Activated CD4-positive, alpha-beta T cell treated with anti-CD3 and anti-CD28 coated beads for 36 hours (primary cell): ENCODE measurements at regions of chr5 and their contacts with region 1.

Region 1: DNA sequence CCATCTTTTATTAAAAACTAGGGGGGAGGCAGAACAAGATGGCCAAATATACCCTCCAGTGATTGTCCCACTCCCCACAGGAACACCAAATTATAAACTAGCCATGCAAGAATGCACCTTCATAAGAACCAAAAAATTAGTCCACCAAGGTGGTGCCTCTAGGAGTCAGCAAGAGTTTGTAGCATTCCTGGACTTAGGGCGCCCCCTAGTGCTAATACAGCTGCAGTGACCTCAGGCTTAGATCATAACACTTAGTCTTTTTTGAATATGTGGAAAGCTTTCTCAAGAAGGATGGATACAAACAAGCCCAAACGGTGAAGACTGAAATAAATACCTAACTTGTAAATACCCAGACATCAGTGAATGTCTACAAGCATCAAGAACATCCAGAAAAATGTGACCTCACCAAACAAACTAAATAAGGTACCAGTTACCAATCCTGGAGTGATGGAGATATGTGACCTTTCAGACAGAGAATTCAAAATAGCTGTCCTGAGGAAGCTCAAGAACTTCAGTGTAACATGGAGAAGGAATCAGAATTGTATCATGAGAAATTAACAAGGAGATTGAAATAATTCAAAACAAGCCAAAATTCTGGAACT is 19.3 kb downstream of the PPIP5K2 start:
- DNase-seq: peak; percentile 88
- ATAC-seq: peak; percentile 95
- H3K4me3 Mint-ChIP-seq: no peak overlapping the region
- H3K27ac Mint-ChIP-seq: no peak overlapping the region
- H3K4me1 Mint-ChIP-seq: peaks cover 8% of the 10 kb centered on the region
- H3K27me3 Mint-ChIP-seq: no peaks in the 10 kb centered on the region

Region 2: DNA sequence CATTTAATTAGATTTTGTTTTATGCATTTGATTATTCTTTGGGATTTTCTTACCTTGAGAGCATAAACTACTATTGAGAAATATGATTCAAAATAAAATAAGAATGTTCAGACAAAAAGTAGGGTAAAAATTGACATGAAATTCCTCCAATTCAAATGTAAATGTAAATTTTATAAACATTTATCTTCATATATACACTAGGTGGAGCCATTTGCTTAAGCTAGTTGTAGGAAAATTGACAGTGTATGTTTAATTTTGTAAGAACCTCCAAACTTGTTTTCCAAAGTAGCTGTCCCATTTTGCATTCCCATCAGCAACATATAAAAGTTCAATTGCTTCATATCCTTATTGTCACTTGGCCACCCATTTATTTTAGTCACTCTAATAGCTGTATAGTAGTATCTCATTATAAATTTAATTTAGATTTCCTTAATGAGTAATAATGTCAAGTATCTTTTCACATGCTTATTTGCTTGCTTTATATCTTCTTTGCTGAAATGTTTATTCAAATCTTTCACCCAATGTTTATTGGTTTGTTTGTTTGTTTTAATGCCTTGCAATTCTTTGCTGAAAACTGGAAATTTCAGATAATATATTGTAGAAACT is 602.9 kb before region 1 on chr5:
- CTCF ChIA-PET with region 1: interaction called, 4 read pairs
- POLR2A ChIA-PET with region 1: no interaction called
- intact Hi-C with region 1: loop called (anchors 1 to 2 kb)
- DNase-seq: no peak
- ATAC-seq: no peak
- H3K4me3 Mint-ChIP-seq: no peak overlapping the region
- H3K27ac Mint-ChIP-seq: no peak overlapping the region
- H3K4me1 Mint-ChIP-seq: no peaks in the 10 kb centered on the region
- H3K27me3 Mint-ChIP-seq: peaks cover 4% of the 10 kb centered on the region

Region 3: GRCh38 chr5:102583276-102584124 is 555.9 kb before region 1 on chr5:
- CTCF ChIA-PET with region 1: interaction called, 6 read pairs
- POLR2A ChIA-PET with region 1: no interaction called
- intact Hi-C with region 1: loop called (anchors 1 kb)
- DNase-seq: no peak
- ATAC-seq: no peak
- H3K4me3 Mint-ChIP-seq: no peak overlapping the region
- H3K27ac Mint-ChIP-seq: no peak overlapping the region
- H3K4me1 Mint-ChIP-seq: no peaks in the 10 kb centered on the region
- H3K27me3 Mint-ChIP-seq: peaks cover 2% of the 10 kb centered on the region

Region 4: DNA sequence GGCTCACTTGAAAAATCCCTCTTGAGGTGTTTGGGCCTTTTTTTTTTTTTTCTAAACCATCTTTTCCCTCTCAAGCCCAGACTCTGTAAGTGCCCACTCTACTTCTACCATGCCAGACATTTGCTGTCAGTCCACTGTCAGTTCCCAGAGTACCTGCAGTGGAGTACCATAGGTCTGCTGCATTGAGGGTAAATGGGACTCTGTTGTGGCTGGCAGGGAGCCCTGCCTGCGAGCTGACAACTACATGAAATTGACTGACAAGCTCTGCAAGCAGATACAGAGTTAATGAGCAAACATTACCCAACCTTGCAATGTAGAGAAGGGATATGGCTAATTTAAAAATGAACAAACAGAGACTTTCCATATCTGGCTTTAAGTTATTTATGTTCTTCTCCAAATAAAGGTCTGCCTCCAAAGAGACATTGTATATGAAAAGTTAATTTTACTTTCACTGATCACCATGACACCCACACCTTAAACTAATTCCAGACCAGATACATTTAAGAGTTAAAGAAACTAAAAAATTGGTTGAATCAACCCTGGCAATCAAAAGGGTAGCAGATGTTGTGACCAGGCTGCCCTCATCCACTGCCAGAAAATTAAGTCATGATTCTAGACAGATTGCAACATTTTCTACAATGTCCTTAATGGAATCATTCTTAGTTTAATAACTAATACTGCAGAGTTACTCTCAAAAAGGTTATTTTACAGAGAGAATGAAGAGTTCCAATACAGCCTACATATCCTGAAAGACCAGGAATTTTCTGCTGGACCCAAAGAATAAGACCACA is 484.6 kb before region 1 on chr5:
- CTCF ChIA-PET with region 1: no interaction called
- POLR2A ChIA-PET with region 1: no interaction called
- intact Hi-C with region 1: no loop called
- DNase-seq: no peak
- ATAC-seq: no peak
- H3K4me3 Mint-ChIP-seq: no peak overlapping the region
- H3K27ac Mint-ChIP-seq: no peak overlapping the region
- H3K4me1 Mint-ChIP-seq: no peaks in the 10 kb centered on the region
- H3K27me3 Mint-ChIP-seq: peaks cover 8% of the 10 kb centered on the region

Region 5: DNA sequence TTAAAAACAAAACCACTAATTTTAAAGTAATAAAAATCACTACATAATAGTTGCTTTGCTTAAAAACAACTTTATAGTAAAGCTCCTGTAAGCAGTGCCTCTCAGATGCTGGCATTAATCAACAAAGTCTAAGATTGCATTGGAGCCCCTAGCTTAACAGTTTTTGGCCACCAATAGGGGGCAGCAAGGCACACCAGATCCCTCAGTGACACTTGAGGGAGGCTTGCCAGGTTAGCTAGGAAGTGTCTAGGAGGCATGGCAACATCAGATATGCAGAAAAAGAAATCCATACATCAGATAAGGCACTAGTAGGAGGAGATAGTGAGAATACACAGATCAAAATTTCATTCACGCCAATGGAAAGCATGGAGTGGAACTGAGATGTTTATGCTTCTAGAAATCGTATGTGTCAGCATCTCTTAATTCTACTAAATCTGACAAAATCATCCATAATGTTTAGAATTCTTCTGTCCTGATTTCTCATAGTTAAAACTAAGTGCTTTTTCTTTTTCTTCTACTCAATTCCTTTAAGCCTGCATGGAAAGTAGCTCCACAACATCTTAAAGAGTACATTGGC is 457.9 kb before region 1 on chr5:
- CTCF ChIA-PET with region 1: interaction called, 42 read pairs
- POLR2A ChIA-PET with region 1: no interaction called
- intact Hi-C with region 1: loop called (anchors 1 kb)
- DNase-seq: peak; percentile 81
- ATAC-seq: peak; percentile 85
- H3K4me3 Mint-ChIP-seq: no peak overlapping the region
- H3K27ac Mint-ChIP-seq: no peak overlapping the region
- H3K4me1 Mint-ChIP-seq: no peaks in the 10 kb centered on the region
- H3K27me3 Mint-ChIP-seq: no peaks in the 10 kb centered on the region

Region 6: GRCh38 chr5:103041071-103041676 is 98.2 kb before region 1 on chr5:
- CTCF ChIA-PET with region 1: interaction called, 3 read pairs
- POLR2A ChIA-PET with region 1: no interaction called
- intact Hi-C with region 1: loop called (anchors 2 kb)
- DNase-seq: no peak
- ATAC-seq: no peak
- H3K4me3 Mint-ChIP-seq: no peak overlapping the region
- H3K27ac Mint-ChIP-seq: no peak overlapping the region
- H3K4me1 Mint-ChIP-seq: no peaks in the 10 kb centered on the region
- H3K27me3 Mint-ChIP-seq: no peaks in the 10 kb centered on the region

Region 7: GRCh38 chr5:103119765-103120606 is 19.4 kb before region 1 on chr5 and contains the starts of genes GIN1 and PPIP5K2:
- CTCF ChIA-PET with region 1: interaction called, 10 read pairs
- POLR2A ChIA-PET with region 1: no interaction called
- intact Hi-C with region 1: loop called in 1 of 2 experiments (anchors 2 kb)
- DNase-seq: peak; percentile 97
- ATAC-seq: peak; percentile 91
- H3K4me3 Mint-ChIP-seq: peak within 1 kb of the TSS; percentile 76
- H3K27ac Mint-ChIP-seq: peak within 1 kb of the TSS; percentile 95
- H3K4me1 Mint-ChIP-seq: peaks cover 39% of the 10 kb centered on the region
- H3K27me3 Mint-ChIP-seq: no peaks in the 10 kb centered on the region
- total RNA-seq, gene GIN1: 9.0 to 9.7 TPM
- total RNA-seq, gene PPIP5K2: 49.5 to 53.4 TPM

Region 8: DNA sequence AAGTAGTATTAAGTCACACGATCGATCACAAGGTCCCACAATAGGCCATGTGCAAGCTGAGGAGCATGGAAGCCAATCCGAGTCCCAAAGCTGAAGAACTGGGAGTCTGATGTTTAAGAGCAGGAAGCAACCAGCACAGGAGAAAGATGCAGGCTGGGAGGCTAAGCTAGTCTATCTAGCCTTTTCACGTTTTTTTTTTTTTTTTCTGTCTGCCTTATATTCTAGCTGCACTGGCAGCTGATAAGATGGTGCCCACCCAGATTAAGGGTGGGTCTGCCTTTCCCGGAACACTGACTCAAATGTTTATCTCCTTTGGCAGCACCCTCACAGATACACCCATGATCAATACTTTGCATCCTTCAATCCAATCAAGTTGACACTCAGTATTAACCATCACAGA is 12.8 kb before region 1 on chr5:
- CTCF ChIA-PET with region 1: interaction called, 34 read pairs
- POLR2A ChIA-PET with region 1: interaction called, 3 read pairs
- intact Hi-C with region 1: loop called in 1 of 2 experiments (anchors 2 kb)
- DNase-seq: no peak
- ATAC-seq: no peak
- H3K4me3 Mint-ChIP-seq: no peak overlapping the region
- H3K27ac Mint-ChIP-seq: no peak overlapping the region
- H3K4me1 Mint-ChIP-seq: peaks cover 52% of the 10 kb centered on the region
- H3K27me3 Mint-ChIP-seq: no peaks in the 10 kb centered on the region